Activated naive CD8-positive, alpha-beta T cell treated with anti-CD3 and anti-CD28 coated beads, Interleukin-2, amount 10 ng/mL, durations not matched to agents 7 days and 5 days (primary cell): ENCODE measurements at regions of chr18 and their contacts with region 1.

Region 1: DNA sequence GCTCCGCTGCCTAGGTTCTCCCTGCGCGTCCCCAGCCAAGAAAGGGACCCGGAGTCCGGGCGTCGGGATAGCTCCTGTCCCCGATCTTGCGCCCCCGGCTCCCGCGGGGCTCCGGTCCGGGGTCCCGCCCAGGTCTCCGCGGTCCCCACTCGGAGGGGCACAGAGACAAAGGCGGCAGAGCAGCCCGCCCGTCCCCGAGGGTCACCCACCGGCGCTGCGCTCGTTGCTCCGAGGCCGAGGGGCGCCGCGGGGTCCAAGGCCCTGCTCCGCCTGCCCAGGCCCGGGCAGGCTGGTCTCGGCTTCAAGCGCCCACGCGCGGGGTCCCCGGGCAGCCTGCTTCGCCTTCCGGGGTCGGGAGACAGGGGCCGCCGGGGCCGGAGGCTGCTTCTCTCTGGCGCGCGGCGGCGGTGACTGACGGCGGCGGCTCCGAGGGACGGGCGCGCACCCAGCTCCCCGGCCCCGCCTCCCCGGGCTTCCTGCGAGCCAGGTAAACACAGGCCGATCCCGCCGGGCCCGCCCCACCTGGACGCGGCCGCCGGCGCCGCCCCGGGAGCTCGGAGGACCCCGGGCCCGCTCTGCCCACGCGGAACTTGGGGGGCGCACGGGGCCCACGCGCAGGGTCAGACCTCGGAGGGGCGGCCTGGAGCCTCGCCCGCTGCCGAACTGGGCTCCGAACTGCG is at the start of gene MBP:
- DNase-seq: peak; percentile 85
- ATAC-seq: peak; percentile 69
- H3K4me3 Mint-ChIP-seq: peak within 1 kb of the TSS; percentile 98
- H3K27ac Mint-ChIP-seq: peak within 1 kb of the TSS; percentile 95
- H3K4me1 Mint-ChIP-seq: peaks cover 44% of the 10 kb centered on the region
- H3K27me3 Mint-ChIP-seq: no peaks in the 10 kb centered on the region
- total RNA-seq, gene MBP: 138 to 148 TPM

Region 2: GRCh38 chr18:77054606-77055428 is 77.7 kb before region 1 on chr18:
- POLR2A ChIA-PET with region 1: interaction called, 24 read pairs
- DNase-seq: peak; percentile 79
- ATAC-seq: peak; percentile 88
- H3K4me3 Mint-ChIP-seq: peak overlapping the region; percentile 90
- H3K27ac Mint-ChIP-seq: peak overlapping the region; percentile 100
- H3K4me1 Mint-ChIP-seq: peaks cover 45% of the 10 kb centered on the region
- H3K27me3 Mint-ChIP-seq: no peaks in the 10 kb centered on the region

Region 3: GRCh38 chr18:77061946-77062517 is 70.5 kb before region 1 on chr18:
- POLR2A ChIA-PET with region 1: interaction called, 42 read pairs
- DNase-seq: no peak
- ATAC-seq: peak; percentile 3
- H3K4me3 Mint-ChIP-seq: peak overlapping the region; percentile 85
- H3K27ac Mint-ChIP-seq: peak overlapping the region; percentile 97
- H3K4me1 Mint-ChIP-seq: peaks cover 75% of the 10 kb centered on the region
- H3K27me3 Mint-ChIP-seq: no peaks in the 10 kb centered on the region

Region 4: GRCh38 chr18:77067291-77068061 is 65.0 kb before region 1 on chr18:
- POLR2A ChIA-PET with region 1: interaction called, 42 read pairs
- DNase-seq: peak; percentile 75
- ATAC-seq: peak; percentile 69
- H3K4me3 Mint-ChIP-seq: peak overlapping the region; percentile 67
- H3K27ac Mint-ChIP-seq: peak overlapping the region; percentile 86
- H3K4me1 Mint-ChIP-seq: peaks cover 74% of the 10 kb centered on the region
- H3K27me3 Mint-ChIP-seq: no peaks in the 10 kb centered on the region

Region 5: GRCh38 chr18:77101410-77102258 is 30.9 kb before region 1 on chr18:
- POLR2A ChIA-PET with region 1: interaction called, 76 read pairs
- DNase-seq: peak; percentile 52
- ATAC-seq: peak; percentile 19
- H3K4me3 Mint-ChIP-seq: peak overlapping the region; percentile 79
- H3K27ac Mint-ChIP-seq: peak overlapping the region; percentile 95
- H3K4me1 Mint-ChIP-seq: peaks cover 76% of the 10 kb centered on the region
- H3K27me3 Mint-ChIP-seq: no peaks in the 10 kb centered on the region

Region 6: DNA sequence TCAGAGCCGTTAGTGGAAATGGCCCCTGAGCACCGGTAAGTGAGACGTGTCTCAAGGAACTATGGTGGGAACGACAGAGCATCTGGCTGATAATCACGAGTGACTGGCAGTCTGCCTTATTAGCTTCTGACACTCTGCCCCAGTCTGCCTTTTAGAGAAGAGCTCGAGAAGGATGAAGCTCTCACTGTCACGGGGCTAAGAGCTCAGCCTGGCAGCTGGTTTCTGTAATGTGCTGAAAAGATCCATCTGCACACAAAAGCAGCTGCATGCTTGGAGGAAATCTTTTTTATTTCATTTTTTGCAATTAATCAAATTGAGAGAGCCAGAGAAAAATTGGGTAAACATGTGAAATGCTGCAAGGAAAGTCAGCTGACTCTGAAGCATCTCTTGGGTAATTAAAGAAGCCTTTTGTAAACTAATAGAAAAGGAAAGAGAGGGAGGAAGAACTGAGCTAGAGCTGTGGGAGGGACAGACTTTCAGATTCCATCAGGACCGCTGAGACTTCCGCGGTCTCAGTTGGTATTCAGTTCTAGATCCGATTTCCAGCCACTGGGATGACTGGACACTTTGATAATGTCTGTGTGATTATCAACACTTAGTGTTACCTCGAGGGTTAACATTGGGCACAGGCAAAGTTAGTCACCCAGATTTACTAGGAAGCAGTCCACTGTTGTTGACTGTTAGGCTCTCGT is 24.4 kb before region 1 on chr18:
- POLR2A ChIA-PET with region 1: interaction called, 18 read pairs
- DNase-seq: no peak
- ATAC-seq: peak; percentile 25
- H3K4me3 Mint-ChIP-seq: peak overlapping the region; percentile 41
- H3K27ac Mint-ChIP-seq: peak overlapping the region; percentile 62
- H3K4me1 Mint-ChIP-seq: peaks cover 58% of the 10 kb centered on the region
- H3K27me3 Mint-ChIP-seq: no peaks in the 10 kb centered on the region

Region 7: GRCh38 chr18:77300579-77300978 is 168.1 kb after region 1 on chr18:
- POLR2A ChIA-PET with region 1: no interaction called
- DNase-seq: no peak
- ATAC-seq: no peak
- H3K4me3 Mint-ChIP-seq: no peak overlapping the region
- H3K27ac Mint-ChIP-seq: no peak overlapping the region
- H3K4me1 Mint-ChIP-seq: no peaks in the 10 kb centered on the region
- H3K27me3 Mint-ChIP-seq: peaks cover 3% of the 10 kb centered on the region